IMR-90 (cell line): ENCODE measurements at regions of chr20 and their contacts with region 1.

Region 1: DNA sequence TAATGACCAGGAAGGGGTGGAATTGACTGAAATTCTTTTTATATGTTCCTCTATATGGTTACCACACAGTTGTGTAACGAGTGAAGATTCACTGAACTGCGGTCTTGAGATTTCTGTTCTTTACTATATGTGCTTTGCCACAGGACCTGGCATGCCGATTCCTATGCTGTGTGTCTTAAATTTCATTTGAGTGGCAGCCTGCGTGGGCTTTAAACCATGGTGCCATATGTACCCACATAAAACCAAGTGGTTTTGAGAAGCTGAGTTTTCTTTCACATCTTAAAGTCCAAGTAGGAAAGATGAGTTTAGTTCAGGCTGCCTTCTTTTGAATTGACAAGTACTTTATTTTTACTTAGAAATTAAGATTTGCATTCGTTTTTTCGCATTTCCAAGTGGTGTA is 101.1 kb downstream of the DOK5 start:
- DNase-seq: no peak
- ATAC-seq: no peak
- H3K4me3 ChIP-seq: no peak overlapping the region
- H3K27ac ChIP-seq: no peak overlapping the region
- H3K4me1 ChIP-seq: no peaks in the 10 kb centered on the region
- H3K27me3 ChIP-seq: no peaks in the 10 kb centered on the region
- CTCF ChIP-seq: no peak
- POLR2A ChIP-seq: no peak
- RAD21 ChIP-seq: no peak

Region 2: GRCh38 chr20:54740511-54741348 is 164.2 kb after region 1 on chr20:
- CTCF ChIA-PET with region 1: no interaction called
- POLR2A ChIA-PET with region 1: no interaction called
- dilution Hi-C with region 1: no loop called
- in situ Hi-C with region 1: no loop called
- intact Hi-C with region 1: no loop called
- DNase-seq: no peak
- ATAC-seq: no peak
- H3K4me3 ChIP-seq: no peak overlapping the region
- H3K27ac ChIP-seq: no peak overlapping the region
- H3K4me1 ChIP-seq: no peaks in the 10 kb centered on the region
- H3K27me3 ChIP-seq: no peaks in the 10 kb centered on the region
- CTCF ChIP-seq: no peak
- POLR2A ChIP-seq: no peak
- RAD21 ChIP-seq: no peak

Region 3: DNA sequence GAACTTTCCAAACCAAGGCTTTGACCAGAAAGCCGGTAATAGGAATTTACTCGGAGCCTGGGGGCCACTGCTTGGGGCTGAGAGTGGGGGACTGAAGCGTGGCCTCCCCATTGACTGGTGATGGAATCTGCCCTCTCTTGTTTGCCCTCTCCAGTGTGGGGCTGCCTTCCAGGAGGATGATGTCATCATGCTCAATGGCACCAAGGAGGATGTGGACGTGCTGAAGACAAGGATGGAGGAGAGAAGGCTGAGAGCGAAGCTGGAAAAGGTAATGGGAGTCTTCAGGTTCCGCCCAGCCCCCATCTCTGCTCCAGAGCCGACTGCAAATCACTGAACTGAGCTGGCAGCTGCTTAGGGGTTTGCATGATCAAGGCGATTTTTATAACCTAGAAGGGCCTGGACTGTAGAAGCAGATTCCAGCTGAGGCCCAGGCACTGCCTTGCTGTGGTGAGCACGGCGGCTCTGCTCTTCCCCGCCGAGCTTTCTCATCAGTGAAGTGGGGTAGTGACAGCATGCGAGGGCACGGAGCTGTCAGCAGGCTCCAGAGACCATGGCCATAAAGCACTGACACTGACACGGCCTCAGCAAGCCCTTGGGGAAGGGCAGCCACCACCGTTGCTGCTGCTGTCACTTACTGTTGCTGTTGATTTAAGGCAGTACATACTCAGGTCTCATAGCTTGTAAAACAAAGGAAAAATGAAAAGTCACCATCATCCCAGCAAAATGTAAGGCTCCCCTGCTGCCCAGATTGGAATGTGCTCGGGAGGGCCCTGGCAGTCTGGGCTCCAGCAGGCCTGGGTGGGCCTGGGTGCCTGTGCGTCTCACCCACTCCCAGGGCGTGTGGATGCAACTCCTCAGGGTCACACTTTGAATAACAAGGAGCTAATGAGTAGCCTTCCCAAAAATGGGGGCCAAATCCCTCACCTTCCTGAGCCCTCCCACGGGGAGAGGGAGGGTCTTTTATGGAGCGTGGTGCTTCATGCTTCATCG is 1936.9 kb after region 1 on chr20:
- CTCF ChIA-PET with region 1: no interaction called
- POLR2A ChIA-PET with region 1: no interaction called
- dilution Hi-C with region 1: no loop called
- in situ Hi-C with region 1: no loop called
- intact Hi-C with region 1: loop called (anchors 5 kb)
- DNase-seq: peak; percentile 7
- ATAC-seq: peak; percentile 39; the same call in 1 of the 2 replicates
- H3K4me3 ChIP-seq: no peak overlapping the region
- H3K27ac ChIP-seq: no peak overlapping the region
- H3K4me1 ChIP-seq: peaks cover 2% of the 10 kb centered on the region; the same call in 1 of the 2 replicates
- H3K27me3 ChIP-seq: no peaks in the 10 kb centered on the region
- CTCF ChIP-seq: no peak
- POLR2A ChIP-seq: no peak
- RAD21 ChIP-seq: no peak